IMR-90 (cell line): ENCODE measurements at regions of chr11 and their contacts with region 1.

Region 1: DNA sequence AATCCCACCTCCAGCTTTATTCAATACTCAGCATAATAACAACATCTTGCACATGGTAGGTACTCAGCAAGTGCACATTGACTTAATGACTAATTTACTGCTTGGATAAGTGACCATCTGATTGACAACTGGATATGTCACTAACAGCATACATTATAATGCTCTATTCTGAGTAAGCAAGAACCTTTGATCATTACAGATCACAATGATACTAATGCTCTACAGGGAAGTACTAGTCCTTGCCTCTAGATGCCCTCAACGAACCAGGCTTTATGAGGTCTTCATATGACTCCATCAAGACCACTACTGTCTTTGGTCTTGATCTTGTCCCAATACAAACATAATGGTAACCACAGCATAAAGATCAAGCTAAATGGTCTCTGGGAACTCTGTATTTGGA is 167.6 kb upstream of the MTMR2 start:
- DNase-seq: peak; percentile 27
- ATAC-seq: no peak
- H3K4me3 ChIP-seq: no peak overlapping the region
- H3K27ac ChIP-seq: no peak overlapping the region
- H3K4me1 ChIP-seq: peaks cover 12% of the 10 kb centered on the region
- H3K27me3 ChIP-seq: no peaks in the 10 kb centered on the region
- CTCF ChIP-seq: 0 out of 2 replicates have a peak, but pooled peaks have one; percentile 23
- POLR2A ChIP-seq: no peak
- RAD21 ChIP-seq: peak; percentile 39

Region 2: DNA sequence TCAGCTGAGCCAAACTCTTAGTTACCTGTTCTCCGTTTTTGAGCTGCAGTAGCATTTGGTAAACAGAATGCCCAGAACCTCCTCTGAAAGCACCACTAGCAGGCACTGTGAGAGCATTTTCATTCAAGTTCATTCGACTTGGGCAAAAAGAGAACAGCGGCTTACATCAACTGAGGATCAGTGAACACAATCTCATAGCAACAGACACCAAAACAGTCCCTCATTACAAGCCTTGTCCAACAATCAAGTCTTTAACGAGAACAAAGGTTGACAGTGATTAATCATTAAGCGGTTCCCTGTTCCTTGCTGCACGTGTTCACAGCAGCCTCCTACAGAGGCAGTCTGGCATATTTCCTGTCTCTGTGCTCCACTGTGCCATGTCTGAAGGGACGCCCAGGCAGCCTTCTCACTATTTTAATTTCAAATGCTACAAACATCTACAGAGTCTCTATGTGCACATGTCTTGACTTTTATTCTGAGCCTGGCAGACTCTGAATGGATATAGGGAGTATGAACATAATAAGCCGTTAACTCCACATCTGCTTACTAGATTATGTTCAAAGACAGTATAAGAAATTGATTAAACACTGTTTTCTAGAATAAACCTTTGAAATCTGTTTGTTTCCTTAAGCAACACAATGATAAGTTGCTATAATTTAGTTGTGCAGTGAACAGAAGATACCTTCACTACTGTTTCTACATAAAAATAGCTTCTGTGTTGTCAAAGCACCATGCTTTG is 79.2 kb before region 1 on chr11:
- CTCF ChIA-PET with region 1: no interaction called
- POLR2A ChIA-PET with region 1: no interaction called
- dilution Hi-C with region 1: no loop called
- in situ Hi-C with region 1: no loop called
- intact Hi-C with region 1: no loop called
- DNase-seq: peak; percentile 54
- ATAC-seq: peak; percentile 31
- H3K4me3 ChIP-seq: no peak overlapping the region
- H3K27ac ChIP-seq: no peak overlapping the region
- H3K4me1 ChIP-seq: peaks cover 15% of the 10 kb centered on the region
- H3K27me3 ChIP-seq: no peaks in the 10 kb centered on the region
- CTCF ChIP-seq: peak; percentile 42
- POLR2A ChIP-seq: no peak
- RAD21 ChIP-seq: peak; percentile 53; the same call in 1 of the 2 replicates

Region 3: DNA sequence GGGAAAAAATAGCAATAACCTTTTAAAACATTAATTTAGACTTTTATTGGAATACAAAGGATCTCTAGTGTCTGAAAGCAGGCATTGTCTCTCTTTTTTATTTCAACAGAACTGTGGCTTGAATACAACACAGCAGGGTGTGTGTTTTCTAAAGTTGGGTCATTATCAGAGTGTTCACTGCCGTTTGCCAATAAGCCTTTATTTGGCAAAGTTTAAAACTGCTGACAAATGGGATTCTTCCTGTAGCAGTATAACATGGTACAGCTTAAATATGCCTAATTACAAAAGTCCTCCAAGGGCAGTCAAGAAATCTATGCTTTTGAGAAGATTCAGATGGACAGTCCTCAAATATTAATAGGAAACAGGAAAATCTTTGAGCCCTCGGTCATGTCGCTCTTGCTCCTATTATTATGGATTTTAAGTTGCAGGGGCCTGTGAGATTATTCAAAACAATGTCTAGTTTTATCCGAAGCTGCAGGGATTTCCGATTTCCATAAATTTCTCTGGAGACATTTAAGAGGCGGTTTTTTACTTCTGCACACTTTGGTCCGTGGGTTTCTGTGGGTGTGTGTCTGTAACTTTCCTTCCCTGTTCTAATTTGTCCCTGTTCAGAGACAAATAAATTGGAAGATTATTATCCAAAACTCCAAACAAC is 51.7 kb after region 1 on chr11:
- CTCF ChIA-PET with region 1: no interaction called
- POLR2A ChIA-PET with region 1: no interaction called
- dilution Hi-C with region 1: no loop called
- in situ Hi-C with region 1: no loop called
- intact Hi-C with region 1: no loop called
- DNase-seq: no peak
- ATAC-seq: no peak
- H3K4me3 ChIP-seq: no peak overlapping the region
- H3K27ac ChIP-seq: no peak overlapping the region
- H3K4me1 ChIP-seq: peaks cover 9% of the 10 kb centered on the region
- H3K27me3 ChIP-seq: no peaks in the 10 kb centered on the region
- CTCF ChIP-seq: no peak
- POLR2A ChIP-seq: no peak
- RAD21 ChIP-seq: no peak

Region 4: GRCh38 chr11:96335388-96335787 is 243.9 kb after region 1 on chr11:
- CTCF ChIA-PET with region 1: no interaction called
- POLR2A ChIA-PET with region 1: no interaction called
- dilution Hi-C with region 1: no loop called
- in situ Hi-C with region 1: no loop called
- intact Hi-C with region 1: loop called (anchors 2 kb)
- DNase-seq: peak; percentile 52
- ATAC-seq: peak; percentile 3; the same call in 1 of the 2 replicates
- H3K4me3 ChIP-seq: no peak overlapping the region
- H3K27ac ChIP-seq: peak overlapping the region; percentile 51; the same call in 1 of the 2 replicates
- H3K4me1 ChIP-seq: peaks cover 32% of the 10 kb centered on the region
- H3K27me3 ChIP-seq: no peaks in the 10 kb centered on the region
- CTCF ChIP-seq: no peak
- POLR2A ChIP-seq: no peak
- RAD21 ChIP-seq: no peak